Activated CD8-positive, alpha-beta T cell treated with anti-CD3 and anti-CD28 coated beads, Interleukin-2, amount 10 ng/mL, durations not matched to agents 7 days and 5 days (primary cell): ENCODE measurements at regions of chr4 and their contacts with region 1.

Region 1: GRCh38 chr4:75995727-75996126 is 5.0 kb upstream of the SDAD1 start:
- DNase-seq: no peak
- ATAC-seq: no peak
- H3K4me3 Mint-ChIP-seq: no peak overlapping the region
- H3K27ac Mint-ChIP-seq: no peak overlapping the region
- H3K4me1 Mint-ChIP-seq: peaks cover 6% of the 10 kb centered on the region
- H3K27me3 Mint-ChIP-seq: peaks cover 14% of the 10 kb centered on the region

Region 2: DNA sequence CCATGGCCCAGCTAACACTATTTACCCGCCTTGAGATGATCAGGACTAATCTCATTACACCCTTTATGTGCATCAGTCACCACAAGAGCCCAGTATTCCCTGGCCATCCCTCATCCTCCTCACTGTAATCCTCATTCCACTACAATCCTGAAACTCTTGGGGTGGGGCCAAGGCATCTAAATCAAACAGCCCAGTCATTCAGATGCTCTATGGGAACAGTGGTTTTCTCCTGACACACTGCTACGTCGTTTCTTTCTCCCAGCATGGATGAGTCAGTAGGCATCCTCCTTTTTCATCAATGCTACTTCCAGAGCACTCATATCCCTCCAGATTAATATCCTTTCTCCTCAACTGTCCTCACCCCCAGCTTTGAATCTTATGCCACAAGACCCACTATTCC is 10.6 kb before region 1 on chr4:
- CTCF ChIA-PET with region 1: interaction called, 23 read pairs
- POLR2A ChIA-PET with region 1: no interaction called
- DNase-seq: no peak
- ATAC-seq: no peak
- H3K4me3 Mint-ChIP-seq: no peak overlapping the region
- H3K27ac Mint-ChIP-seq: no peak overlapping the region
- H3K4me1 Mint-ChIP-seq: peaks cover 24% of the 10 kb centered on the region
- H3K27me3 Mint-ChIP-seq: no peaks in the 10 kb centered on the region

Region 3: GRCh38 chr4:76013540-76013939 is 17.8 kb after region 1 on chr4:
- CTCF ChIA-PET with region 1: interaction called, 19 read pairs
- POLR2A ChIA-PET with region 1: no interaction called
- DNase-seq: no peak
- ATAC-seq: no peak
- H3K4me3 Mint-ChIP-seq: no peak overlapping the region
- H3K27ac Mint-ChIP-seq: no peak overlapping the region
- H3K4me1 Mint-ChIP-seq: peaks cover 9% of the 10 kb centered on the region
- H3K27me3 Mint-ChIP-seq: peaks cover 11% of the 10 kb centered on the region

Region 4: DNA sequence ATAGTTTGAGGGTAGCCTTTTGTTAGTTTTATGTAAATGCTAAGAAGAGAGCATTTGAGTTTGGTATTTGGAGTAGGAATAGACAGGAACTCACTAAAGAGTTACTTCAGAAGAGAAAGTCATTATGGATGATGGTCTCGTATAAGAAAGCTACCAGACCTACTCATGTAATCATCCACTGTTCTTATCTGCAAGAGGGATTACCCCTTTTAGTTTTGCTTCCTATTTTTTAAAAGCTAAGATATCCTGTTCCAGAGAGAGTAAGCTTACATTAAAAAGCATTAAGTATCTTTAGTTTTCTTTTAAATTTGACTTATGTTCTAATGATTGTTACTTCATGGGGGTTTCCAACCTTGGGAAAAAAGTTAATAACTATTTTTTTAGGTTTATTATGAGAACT is 66.3 kb after region 1 on chr4:
- CTCF ChIA-PET with region 1: interaction called, 39 read pairs
- POLR2A ChIA-PET with region 1: no interaction called
- DNase-seq: no peak
- ATAC-seq: no peak
- H3K4me3 Mint-ChIP-seq: no peak overlapping the region
- H3K27ac Mint-ChIP-seq: no peak overlapping the region
- H3K4me1 Mint-ChIP-seq: peaks cover 21% of the 10 kb centered on the region
- H3K27me3 Mint-ChIP-seq: no peaks in the 10 kb centered on the region